Ascending aorta (tissue), 2 donors: ENCODE measurements at regions of chr2 and their contacts with region 1.

Region 1: DNA sequence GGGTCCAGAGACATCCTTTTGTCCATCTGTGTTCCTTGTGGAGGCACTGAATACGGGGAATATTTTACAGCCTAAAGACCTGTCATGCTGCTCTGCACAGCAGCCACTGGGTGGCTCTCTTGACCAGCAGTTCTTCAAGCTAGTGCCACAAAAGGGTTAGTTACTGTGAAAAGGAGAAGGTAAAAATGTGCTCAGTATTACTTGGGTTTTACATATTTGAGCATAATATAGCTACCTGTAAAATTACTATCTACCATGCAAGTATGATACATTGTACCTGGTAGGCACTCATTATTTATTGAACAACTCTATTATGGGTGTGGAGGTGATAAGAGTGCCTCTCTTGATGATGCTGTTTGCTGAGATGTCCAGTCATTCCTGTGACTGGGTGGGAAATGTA is 23.6 kb downstream of the FZD5 start:
- DNase-seq: no peak
- H3K4me3 ChIP-seq: no peak overlapping the region
- H3K27ac ChIP-seq: no peak overlapping the region
- H3K4me1 ChIP-seq: no peaks in the 10 kb centered on the region
- H3K27me3 ChIP-seq: no peaks in the 10 kb centered on the region
- CTCF ChIP-seq: peak; percentile 49 to 76 (median 59)

Region 2: DNA sequence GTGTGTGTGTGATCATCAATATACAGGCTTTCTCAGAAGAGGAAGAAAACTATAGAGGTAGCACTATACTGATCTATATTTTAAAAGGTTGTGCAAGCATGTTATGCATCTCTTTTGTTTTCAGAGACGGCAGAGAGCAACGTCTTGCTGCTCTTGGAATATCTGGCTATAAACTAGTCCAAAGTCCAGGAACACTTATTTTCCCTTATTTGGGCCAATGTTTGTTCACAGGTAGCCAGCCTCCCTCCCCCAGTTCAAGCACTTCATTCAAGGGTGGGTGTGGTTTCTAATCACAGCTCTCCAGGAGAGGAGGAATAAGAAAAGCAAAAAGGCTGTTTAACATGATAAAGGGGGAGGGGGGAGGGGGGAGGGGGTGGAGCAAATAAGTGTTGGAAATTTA is 19.4 kb after region 1 on chr2:
- intact Hi-C with region 1: no loop called
- DNase-seq: no peak
- H3K4me3 ChIP-seq: no peak overlapping the region
- H3K27ac ChIP-seq: no peak overlapping the region
- H3K4me1 ChIP-seq: peaks cover 7 to 9% of the 10 kb centered on the region in 2 donors
- H3K27me3 ChIP-seq: no peaks in the 10 kb centered on the region
- CTCF ChIP-seq: no peak

Region 3: DNA sequence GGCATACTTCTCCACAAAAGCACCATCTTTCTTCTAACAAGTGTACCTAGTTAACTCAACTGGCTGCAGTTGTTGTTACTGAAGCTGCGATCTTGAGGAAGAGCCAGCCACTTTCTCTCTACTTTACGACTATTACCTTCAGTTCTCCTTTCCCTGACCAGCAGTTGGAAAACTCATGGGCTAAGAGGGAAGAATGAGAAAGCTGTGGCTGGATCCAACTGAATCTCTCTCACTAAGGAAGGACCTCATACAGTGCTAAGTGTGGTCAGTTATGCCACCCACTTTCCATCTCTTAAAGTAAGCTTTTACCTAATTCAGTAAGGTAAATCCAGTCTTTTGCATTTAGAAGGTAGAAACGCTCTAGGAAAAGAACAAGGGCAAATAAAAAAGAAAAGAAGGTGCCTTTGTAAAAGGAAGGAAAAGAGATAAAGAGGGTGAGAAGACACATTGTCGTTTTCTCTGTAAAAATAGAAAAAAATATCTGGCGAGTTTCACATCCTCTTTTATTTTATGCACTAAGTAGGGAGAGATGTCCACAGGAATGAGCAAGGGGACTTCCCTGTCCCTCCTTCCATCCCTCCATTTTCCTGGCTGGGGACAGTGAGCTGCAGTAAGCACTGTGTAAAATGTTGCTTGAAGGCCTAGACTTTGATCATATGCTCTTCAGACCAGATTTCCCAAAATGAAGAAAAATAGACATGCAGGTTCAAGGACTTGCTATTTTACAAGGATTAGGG is 205.8 kb after region 1 on chr2:
- intact Hi-C with region 1: no loop called
- DNase-seq: no peak
- H3K4me3 ChIP-seq: no peak overlapping the region
- H3K27ac ChIP-seq: no peak overlapping the region
- H3K4me1 ChIP-seq: no peaks in the 10 kb centered on the region
- H3K27me3 ChIP-seq: no peaks in the 10 kb centered on the region
- CTCF ChIP-seq: no peak

Region 4: DNA sequence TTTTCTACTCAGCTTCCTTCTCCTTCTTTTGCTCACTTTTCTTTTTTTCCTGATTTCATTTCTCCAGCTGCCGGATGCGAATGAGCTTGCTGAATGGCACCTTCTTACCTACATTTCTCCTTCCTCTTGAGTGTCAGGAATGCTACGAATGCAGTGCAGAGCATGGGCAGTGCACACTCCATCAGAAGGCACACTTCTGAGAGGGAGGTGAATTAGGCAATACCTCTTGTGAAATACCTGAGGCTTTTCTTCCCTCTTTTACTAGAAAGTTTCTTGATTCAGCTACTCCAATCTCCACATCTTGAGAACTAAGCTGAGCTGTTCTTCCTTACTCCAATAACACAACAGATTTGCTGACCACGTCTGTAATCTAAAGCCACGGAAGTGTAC is 228.1 kb after region 1 on chr2:
- intact Hi-C with region 1: loop called (anchors 5 kb)
- DNase-seq: no peak
- H3K4me3 ChIP-seq: no peak overlapping the region
- H3K27ac ChIP-seq: no peak overlapping the region
- H3K4me1 ChIP-seq: peaks cover 0 to 5% of the 10 kb centered on the region in 2 donors
- H3K27me3 ChIP-seq: no peaks in the 10 kb centered on the region
- CTCF ChIP-seq: no peak

Region 5: GRCh38 chr2:208040199-208041171 is 294.4 kb after region 1 on chr2:
- intact Hi-C with region 1: loop called (anchors 5 kb)
- DNase-seq: peak; percentile 11 to 78
- H3K4me3 ChIP-seq: no peak overlapping the region
- H3K27ac ChIP-seq: no peak overlapping the region
- H3K4me1 ChIP-seq: no peaks in the 10 kb centered on the region
- H3K27me3 ChIP-seq: no peaks in the 10 kb centered on the region
- CTCF ChIP-seq: peak; percentile 56 to 66 (median 65)

Region 6: DNA sequence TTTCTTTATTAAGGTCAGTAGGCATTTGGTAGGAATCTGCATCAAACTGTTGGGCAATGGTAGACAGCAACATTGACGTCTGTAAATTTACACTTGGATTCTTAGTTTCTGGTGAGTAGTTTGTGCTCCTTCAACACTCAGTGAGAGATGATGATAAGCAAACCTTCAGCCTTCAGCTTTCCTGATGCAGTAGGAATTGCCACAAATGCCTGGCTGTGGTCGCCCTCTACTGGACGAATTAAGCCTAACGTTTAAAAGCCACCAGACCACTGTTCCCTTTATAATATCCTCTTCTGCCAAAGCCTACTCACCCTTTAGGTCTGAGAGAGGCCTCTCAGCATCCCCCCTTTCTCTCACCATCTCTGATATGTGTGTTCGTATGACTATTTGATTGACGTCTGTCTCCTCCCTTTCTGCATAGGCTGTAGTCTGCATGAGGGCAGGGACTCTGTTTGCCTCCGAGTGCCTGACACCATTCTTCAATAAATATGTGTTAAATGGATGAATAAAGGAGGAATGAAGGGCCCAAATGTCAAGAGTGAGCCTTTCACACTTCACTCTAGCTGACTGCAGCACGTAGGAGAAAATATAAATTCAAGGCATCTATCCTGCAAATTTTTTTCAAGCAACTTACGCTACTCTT is 326.2 kb after region 1 on chr2:
- intact Hi-C with region 1: loop called (anchors 2 kb)
- DNase-seq: peak in 1 of 2 donors; percentile 78
- H3K4me3 ChIP-seq: no peak overlapping the region
- H3K27ac ChIP-seq: no peak overlapping the region
- H3K4me1 ChIP-seq: no peaks in the 10 kb centered on the region
- H3K27me3 ChIP-seq: no peaks in the 10 kb centered on the region
- CTCF ChIP-seq: peak; percentile 63 to 74 (median 70)